Endothelial cell of umbilical vein (primary cell): ENCODE measurements at regions of chr9 and their contacts with region 1.

Region 1: DNA sequence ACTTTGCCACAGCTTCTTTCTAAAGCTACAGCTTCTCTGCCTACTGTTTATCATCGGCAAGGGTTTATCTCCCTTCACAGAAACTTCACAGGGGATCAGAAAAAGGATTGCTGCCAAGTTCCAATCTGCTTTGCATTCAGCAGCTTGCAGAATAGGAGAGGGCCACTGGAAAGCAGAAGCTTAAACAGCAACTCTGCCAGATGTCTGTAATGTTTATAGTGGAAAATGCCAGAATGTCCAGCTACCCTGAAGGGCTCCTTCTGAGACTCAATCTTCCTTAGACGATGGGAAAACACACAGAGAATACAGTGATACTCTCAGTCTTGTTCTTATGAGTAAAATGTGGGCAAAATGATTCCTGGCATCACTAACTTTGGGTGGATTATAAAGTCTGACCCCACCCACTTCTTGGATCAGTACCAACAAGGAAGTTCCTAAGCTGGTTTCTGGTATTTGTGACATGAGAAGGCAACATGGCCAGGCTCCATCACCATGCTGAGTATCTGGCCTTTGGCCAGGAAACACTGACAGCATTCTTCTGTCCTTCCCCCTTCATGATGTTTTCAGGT is 19.0 kb downstream of the STOM start:
- DNase-seq: peak; percentile 98
- H3K4me3 ChIP-seq: no peak overlapping the region
- H3K27ac ChIP-seq: peak overlapping the region; percentile 66
- H3K4me1 ChIP-seq: peaks cover 52% of the 10 kb centered on the region
- H3K27me3 ChIP-seq: no peaks in the 10 kb centered on the region
- CTCF ChIP-seq: no peak
- POLR2A ChIP-seq: no peak

Region 2: DNA sequence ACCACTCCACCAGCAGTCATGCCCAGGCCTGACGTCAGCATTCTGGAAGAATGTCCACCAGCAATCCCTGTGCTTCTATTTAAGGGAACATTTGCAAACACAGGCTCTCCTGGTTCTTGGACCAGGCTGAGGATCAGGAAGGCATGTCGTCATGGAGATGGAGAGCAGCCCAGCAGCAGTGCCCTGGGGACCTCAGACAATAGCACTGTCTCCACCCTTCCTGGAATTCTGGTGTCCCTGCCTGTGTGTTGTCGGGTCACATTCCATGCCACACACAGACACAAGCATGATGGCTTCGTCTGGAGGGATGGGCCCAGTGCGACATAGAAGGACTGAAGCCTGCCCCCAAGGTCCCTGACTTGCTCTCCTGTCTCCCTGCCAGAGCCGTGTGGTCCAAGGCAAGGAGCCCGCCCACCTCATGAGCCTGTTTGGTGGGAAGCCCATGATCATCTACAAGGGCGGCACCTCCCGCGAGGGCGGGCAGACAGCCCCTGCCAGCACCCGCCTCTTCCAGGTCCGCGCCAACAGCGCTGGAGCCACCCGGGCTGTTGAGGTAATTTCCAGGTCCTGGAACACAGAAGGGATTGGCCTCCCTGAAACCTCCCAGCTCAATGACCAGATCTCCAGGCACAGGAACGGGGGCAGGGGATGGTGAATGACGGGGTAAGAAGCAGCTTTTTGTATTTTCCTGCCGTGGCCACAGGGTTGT is 24.8 kb before region 1 on chr9:
- CTCF ChIA-PET with region 1: interaction called, 18 read pairs
- POLR2A ChIA-PET with region 1: no interaction called
- dilution Hi-C with region 1: no loop called
- intact Hi-C with region 1: loop called (anchors 1 kb)
- DNase-seq: peak; percentile 83
- H3K4me3 ChIP-seq: no peak overlapping the region
- H3K27ac ChIP-seq: peak overlapping the region; percentile 50
- H3K4me1 ChIP-seq: peaks cover 28% of the 10 kb centered on the region
- H3K27me3 ChIP-seq: no peaks in the 10 kb centered on the region
- CTCF ChIP-seq: no peak
- POLR2A ChIP-seq: no peak

Region 3: GRCh38 chr9:121362813-121363621 is 11.9 kb after region 1 on chr9:
- CTCF ChIA-PET with region 1: interaction called, 8 read pairs
- POLR2A ChIA-PET with region 1: interaction called, 11 read pairs
- dilution Hi-C with region 1: no loop called
- intact Hi-C with region 1: no loop called
- DNase-seq: peak; percentile 75
- H3K4me3 ChIP-seq: no peak overlapping the region
- H3K27ac ChIP-seq: peak overlapping the region; percentile 66
- H3K4me1 ChIP-seq: peaks cover 96% of the 10 kb centered on the region
- H3K27me3 ChIP-seq: no peaks in the 10 kb centered on the region
- CTCF ChIP-seq: no peak
- POLR2A ChIP-seq: no peak

Region 4: DNA sequence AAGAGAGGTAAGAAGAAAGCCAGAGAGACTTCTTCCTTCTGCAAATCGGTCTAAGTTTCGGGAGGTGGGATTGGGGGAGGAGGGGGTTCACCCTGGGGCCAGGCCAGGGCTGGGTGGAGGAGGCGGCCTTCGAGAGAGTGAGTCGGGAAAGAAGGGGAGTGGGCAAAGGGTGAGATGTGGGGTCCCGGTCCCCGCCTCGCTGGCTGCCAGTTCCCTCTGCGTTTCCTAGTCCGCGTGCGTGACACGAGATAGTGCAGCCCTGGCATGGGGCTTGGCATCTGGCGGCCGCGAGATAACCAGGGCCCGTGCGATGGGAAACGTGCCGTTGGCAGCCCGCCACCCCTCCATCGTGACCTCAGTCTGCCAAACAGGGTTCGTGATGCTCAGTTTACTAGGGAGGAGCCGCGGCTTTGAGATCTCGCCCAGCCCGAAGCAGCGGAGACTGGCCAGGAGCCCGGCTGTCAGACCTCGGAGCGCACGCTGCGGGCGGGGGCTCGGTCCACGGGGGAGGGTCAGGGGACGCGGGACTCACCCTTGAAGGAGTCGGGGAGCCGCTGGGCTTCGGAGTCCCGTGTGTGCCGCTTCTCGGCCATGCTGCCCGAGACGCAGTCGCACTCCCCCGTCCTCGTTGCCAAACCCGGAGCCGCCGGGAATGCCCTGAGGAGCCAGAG is 18.7 kb after region 1 on chr9 and contains the start of gene STOM:
- CTCF ChIA-PET with region 1: interaction called, 34 read pairs
- POLR2A ChIA-PET with region 1: interaction called, 11 read pairs
- dilution Hi-C with region 1: no loop called
- intact Hi-C with region 1: loop called (anchors 1 kb)
- DNase-seq: peak; percentile 89
- H3K4me3 ChIP-seq: peak within 1 kb of the TSS; percentile 66 to 88 (median 78)
- H3K27ac ChIP-seq: peak within 1 kb of the TSS; percentile 93
- H3K4me1 ChIP-seq: peaks cover 43% of the 10 kb centered on the region
- H3K27me3 ChIP-seq: no peaks in the 10 kb centered on the region
- CTCF ChIP-seq: no peak
- POLR2A ChIP-seq: peak; percentile 98
- total RNA-seq, gene STOM: 138 and 170 TPM in 2 replicates

Region 5: GRCh38 chr9:121399883-121400607 is 49.0 kb after region 1 on chr9:
- CTCF ChIA-PET with region 1: interaction called, 10 read pairs
- POLR2A ChIA-PET with region 1: interaction called, 4 read pairs
- dilution Hi-C with region 1: no loop called
- intact Hi-C with region 1: no loop called
- DNase-seq: peak; percentile 82
- H3K4me3 ChIP-seq: no peak overlapping the region
- H3K27ac ChIP-seq: no peak overlapping the region
- H3K4me1 ChIP-seq: peaks cover 21% of the 10 kb centered on the region
- H3K27me3 ChIP-seq: no peaks in the 10 kb centered on the region
- CTCF ChIP-seq: peak; percentile 25 to 35
- POLR2A ChIP-seq: no peak

Region 6: GRCh38 chr9:121871431-121872025 is 520.5 kb after region 1 on chr9:
- CTCF ChIA-PET with region 1: no interaction called
- POLR2A ChIA-PET with region 1: no interaction called
- dilution Hi-C with region 1: no loop called
- intact Hi-C with region 1: no loop called
- DNase-seq: no peak
- H3K4me3 ChIP-seq: no peak overlapping the region
- H3K27ac ChIP-seq: no peak overlapping the region
- H3K4me1 ChIP-seq: no peaks in the 10 kb centered on the region
- H3K27me3 ChIP-seq: no peaks in the 10 kb centered on the region
- CTCF ChIP-seq: no peak
- POLR2A ChIP-seq: no peak